BJ (cell line): ENCODE measurements at regions of chr6 and their contacts with region 1.

Region 1: DNA sequence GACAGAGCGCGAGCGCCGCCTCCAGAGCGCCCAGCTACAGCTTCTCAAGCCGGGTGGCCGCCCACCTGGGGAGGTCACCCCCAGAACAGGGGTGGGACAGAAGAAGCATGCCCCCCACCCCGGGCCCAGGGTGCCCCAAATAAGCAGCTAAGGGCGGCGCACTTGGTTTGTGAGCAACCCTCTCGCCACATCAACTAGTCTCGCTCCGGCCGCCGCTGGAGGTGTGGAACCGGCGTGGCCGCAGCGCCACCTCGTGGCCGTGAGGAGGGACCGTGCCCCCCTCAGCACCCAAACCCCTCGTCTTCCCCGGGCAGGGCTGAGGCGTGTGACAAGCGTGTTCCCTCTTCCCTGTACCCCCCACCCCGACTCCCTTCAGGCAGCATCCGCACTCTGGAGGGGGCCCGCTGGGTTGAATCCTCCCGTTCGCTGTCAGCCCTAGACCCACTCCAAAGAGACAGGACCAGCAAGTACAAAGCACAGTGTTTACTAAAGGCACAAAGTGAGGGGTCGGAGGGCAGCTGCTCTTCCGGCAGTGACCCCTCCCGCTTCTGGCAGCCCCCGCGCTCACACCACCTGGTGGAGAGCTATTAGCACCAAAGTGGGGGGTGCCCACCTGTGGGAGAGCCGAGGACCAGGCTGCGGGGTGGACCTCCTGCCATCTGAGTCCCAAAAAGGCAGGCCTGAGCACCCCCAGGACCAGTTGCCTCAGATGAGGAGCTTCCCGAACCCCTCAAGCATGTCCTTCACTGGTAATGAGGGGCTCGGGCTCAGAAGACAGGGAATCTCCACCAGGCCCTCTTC is 45.4 kb downstream of the MDFI start:
- DNase-seq: no peak
- H3K4me3 ChIP-seq: peak overlapping the region; percentile 2; the same call in 1 of the 2 replicates
- H3K27me3 ChIP-seq: no peaks in the 10 kb centered on the region
- CTCF ChIP-seq: peak; percentile 96

Region 2: GRCh38 chr6:41463062-41463930 is 220.4 kb before region 1 on chr6:
- CTCF ChIA-PET with region 1: interaction called, 11 read pairs
- POLR2A ChIA-PET with region 1: no interaction called
- DNase-seq: no peak
- H3K4me3 ChIP-seq: no peak overlapping the region
- H3K27me3 ChIP-seq: peaks cover 5% of the 10 kb centered on the region; the same call in 1 of the 2 replicates
- CTCF ChIP-seq: peak; percentile 76

Region 3: DNA sequence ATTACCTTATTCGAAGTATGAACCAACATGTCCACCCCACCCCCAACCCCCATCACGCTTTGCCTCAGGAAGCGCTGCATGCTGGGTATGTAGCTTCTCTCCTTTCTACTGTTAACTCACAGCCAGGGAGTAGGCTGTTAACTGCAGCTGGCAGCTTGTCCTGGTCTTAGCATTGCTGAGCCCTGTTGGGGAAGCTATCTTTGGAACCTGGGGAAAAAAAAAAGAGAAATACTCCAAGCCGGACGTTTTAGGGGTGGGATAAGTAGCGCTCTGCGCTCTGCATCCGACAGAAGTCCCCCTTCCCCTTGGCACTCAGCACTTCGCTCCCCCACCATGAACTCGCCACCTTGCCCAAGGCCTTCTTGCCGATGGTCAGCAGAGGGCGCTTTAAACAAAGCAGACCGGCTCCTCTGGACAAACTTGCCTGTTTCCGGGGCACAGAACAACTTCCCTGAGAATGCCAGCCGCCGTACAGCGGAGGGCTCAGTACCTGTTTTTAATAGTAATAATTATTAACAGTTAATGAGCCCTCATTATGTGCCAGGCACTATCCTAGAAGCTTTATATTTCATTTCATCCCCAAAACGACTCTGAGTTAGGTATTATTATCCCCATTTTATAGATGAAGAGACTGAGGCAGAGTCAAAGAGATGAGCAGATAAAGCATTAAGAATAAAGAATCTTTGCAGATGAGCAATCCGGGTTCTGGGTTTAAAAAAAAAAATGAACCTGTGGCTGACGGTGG is 80.7 kb before region 1 on chr6:
- CTCF ChIA-PET with region 1: interaction called, 33 read pairs
- POLR2A ChIA-PET with region 1: no interaction called
- DNase-seq: no peak
- H3K4me3 ChIP-seq: no peak overlapping the region
- H3K27me3 ChIP-seq: no peaks in the 10 kb centered on the region
- CTCF ChIP-seq: peak; percentile 94

Region 4: GRCh38 chr6:41697861-41698781 is 14.4 kb after region 1 on chr6:
- CTCF ChIA-PET with region 1: interaction called, 26 read pairs
- POLR2A ChIA-PET with region 1: no interaction called
- DNase-seq: peak; percentile 89
- H3K4me3 ChIP-seq: no peak overlapping the region
- H3K27me3 ChIP-seq: no peaks in the 10 kb centered on the region
- CTCF ChIP-seq: no peak

Region 5: GRCh38 chr6:41735427-41736356 is 52.0 kb after region 1 on chr6 and contains the start of gene TFEB:
- CTCF ChIA-PET with region 1: interaction called, 28 read pairs
- POLR2A ChIA-PET with region 1: no interaction called
- DNase-seq: peak; percentile 36
- H3K4me3 ChIP-seq: peak within 1 kb of the TSS; percentile 85
- H3K27me3 ChIP-seq: no peaks in the 10 kb centered on the region; the same call in 1 of the 2 replicates
- CTCF ChIP-seq: peak; percentile 84
- polyA plus RNA-seq, gene TFEB: 13.2 and 21.9 TPM in 2 replicates